ENCODE measurements at regions of chr13 and their contacts with region 1.

Region 1: DNA sequence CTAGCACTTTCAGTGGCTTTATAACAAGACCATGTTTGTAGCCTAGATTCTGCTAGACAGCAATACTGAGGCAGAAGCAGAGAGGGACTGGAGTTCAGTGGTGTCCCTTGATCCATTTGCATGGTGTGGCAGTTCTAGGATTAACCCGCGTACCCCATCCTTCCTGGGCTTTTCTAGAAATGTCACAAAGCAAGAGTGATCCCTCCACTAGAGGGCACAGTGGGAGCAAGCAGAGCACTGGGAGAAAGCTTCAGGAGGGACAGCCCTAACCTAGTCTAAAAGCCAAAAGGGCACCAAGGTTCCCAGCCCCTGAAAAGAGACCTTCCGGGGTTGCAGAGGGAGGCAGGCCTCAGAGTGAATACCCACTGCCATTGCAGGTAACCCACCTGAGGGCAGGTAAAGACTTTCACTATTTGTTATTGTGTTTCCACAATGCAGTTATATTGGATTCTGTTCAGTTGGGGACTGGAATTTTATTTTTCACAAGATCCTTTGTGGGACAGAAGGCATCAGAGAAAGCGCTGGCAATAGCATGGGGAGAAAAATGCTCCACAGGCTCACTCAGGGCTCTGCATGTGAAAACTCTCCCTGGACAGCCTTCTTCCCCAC is 170.6 kb downstream of the FLT1 start:
- DNase-seq: peak; percentile 34 to 75
- ATAC-seq: peak; percentile 71 to 88 (median 80)
- H3K4me3 ChIP-seq: no peak overlapping the region
- H3K4me3 Mint-ChIP-seq: no peak overlapping the region
- H3K27ac ChIP-seq: no peak overlapping the region
- H3K27ac Mint-ChIP-seq: no peak overlapping the region
- H3K4me1 ChIP-seq: no peaks in the 10 kb centered on the region
- H3K4me1 Mint-ChIP-seq: no peaks in the 10 kb centered on the region
- H3K27me3 ChIP-seq: no peaks in the 10 kb centered on the region
- H3K27me3 Mint-ChIP-seq: peaks cover 0 to 6% of the 10 kb centered on the region in 2 donors
- CTCF ChIP-seq: peak; percentile 72

Region 2: GRCh38 chr13:28636674-28637317 is 312.5 kb after region 1 on chr13:
- intact Hi-C with region 1: loop called (anchors 1 kb)
- DNase-seq: peak in 1 of 2 donors; percentile 76
- ATAC-seq: peak; percentile 50 to 59 (median 54)
- H3K4me3 ChIP-seq: no peak overlapping the region
- H3K4me3 Mint-ChIP-seq: no peak overlapping the region
- H3K27ac ChIP-seq: no peak overlapping the region
- H3K27ac Mint-ChIP-seq: no peak overlapping the region
- H3K4me1 ChIP-seq: no peaks in the 10 kb centered on the region
- H3K4me1 Mint-ChIP-seq: peaks cover 5 to 6% of the 10 kb centered on the region in 2 donors
- H3K27me3 ChIP-seq: peaks cover 3% of the 10 kb centered on the region
- H3K27me3 Mint-ChIP-seq: peaks cover 14 to 27% of the 10 kb centered on the region in 2 donors
- CTCF ChIP-seq: peak; percentile 52

Measured in natural killer cell (primary cell).